ENCODE measurements at regions of chr9 and their contacts with region 1.

Region 1: DNA sequence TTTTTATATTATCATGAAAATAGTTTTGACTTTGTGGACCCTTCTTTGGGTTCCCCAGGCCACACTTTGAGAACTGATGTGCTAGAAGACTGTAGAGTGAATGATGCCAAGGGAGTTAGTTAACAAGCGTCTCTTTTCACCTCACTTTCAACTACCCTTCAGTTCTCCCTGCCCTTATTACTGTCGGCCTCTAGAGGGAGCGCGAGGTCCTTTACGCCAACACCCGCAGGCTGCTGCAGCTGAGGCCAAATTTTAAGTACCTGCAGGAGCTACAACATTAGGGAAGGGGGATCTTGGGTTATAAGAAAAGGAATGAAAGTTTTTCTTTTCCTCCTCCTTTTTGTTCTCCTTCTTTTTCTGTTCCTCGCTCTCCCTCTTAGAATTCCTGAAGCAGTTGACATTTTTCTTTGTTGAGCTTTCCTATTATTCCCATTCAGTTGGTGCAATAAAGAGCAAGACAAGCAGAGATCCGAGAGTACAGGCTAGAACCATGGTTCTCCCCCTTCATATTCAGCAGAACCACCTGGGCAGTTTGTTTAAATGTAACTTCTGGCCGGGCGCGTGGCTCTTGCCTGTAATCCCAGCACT is 84.0 kb downstream of the ZFAND5 start:
- DNase-seq: peak; percentile 82 to 93
- H3K4me3 ChIP-seq: no peak overlapping the region
- H3K27ac ChIP-seq: no peak overlapping the region
- H3K4me1 ChIP-seq: no peaks in the 10 kb centered on the region
- H3K27me3 ChIP-seq: no peaks in the 10 kb centered on the region
- CTCF ChIP-seq: peak in 5 of 7 experiments; percentile 80 to 91 (median 84)
- EP300 ChIP-seq: no peak
- POLR2A ChIP-seq: no peak

Region 2: DNA sequence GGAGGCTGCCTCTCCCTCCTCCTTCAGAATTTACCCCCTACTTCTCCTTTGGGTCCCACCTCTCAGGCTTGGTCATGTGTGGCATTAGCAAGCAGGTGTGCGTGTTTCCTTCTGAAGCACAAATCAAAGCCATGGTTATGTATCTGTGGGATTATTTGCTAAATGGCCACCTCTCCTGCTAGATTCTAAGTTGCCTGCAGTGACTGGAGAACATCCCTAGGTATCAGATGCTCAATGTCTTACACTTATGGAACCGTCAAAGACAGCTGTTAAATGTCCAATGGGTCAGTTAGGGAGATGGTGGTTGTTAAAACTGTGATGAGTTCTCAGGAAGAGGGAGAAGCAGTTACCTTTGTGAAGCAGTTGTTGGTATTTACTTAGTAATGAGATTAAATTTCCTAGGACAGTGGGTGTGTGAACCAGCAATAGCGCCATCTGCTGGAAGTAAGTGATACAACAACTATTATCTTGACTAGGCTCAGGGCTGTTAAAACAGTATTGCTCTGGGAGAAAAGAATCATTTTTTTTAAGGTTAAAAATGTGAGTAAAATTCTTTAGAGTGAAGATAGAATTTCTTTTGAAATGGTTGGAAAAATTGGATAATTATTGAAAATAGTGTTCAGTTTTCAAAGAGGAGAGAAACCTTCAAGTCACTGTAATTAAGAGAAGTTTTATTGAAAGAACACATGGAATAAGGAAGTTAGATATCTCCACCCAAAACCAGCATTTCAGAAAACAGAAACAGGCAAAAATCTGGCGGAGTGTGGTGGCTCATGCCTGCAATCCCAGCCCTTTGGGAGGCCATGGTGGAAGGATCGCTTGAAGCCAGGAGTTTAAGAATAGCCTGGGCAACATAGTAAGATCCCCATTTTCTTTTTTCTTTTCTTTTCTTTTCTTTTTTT is 311.7 kb after region 1 on chr9:
- intact Hi-C with region 1: loop called (anchors 5 kb)
- DNase-seq: peak in 1 of 2 donors; percentile 87
- H3K4me3 ChIP-seq: no peak overlapping the region
- H3K27ac ChIP-seq: peak overlapping the region in 3 of 5 donors; percentile 28 to 36 (median 35)
- H3K4me1 ChIP-seq: peaks cover 4 to 40% (median 11%) of the 10 kb centered on the region in 4 donors
- H3K27me3 ChIP-seq: no peaks in the 10 kb centered on the region
- CTCF ChIP-seq: peak in 5 of 7 experiments; percentile 56 to 92 (median 88)
- EP300 ChIP-seq: no peak
- POLR2A ChIP-seq: no peak

Region 3: GRCh38 chr9:72823971-72824370 is 543.0 kb after region 1 on chr9:
- intact Hi-C with region 1: loop called (anchors 5 kb)
- DNase-seq: no peak
- H3K4me3 ChIP-seq: no peak overlapping the region
- H3K27ac ChIP-seq: no peak overlapping the region
- H3K4me1 ChIP-seq: peaks cover 9 to 32% (median 19%) of the 10 kb centered on the region in 4 donors
- H3K27me3 ChIP-seq: no peaks in the 10 kb centered on the region
- CTCF ChIP-seq: no peak
- EP300 ChIP-seq: no peak
- POLR2A ChIP-seq: no peak